ENCODE measurements at regions of chr1 and their contacts with region 1.

Region 1: DNA sequence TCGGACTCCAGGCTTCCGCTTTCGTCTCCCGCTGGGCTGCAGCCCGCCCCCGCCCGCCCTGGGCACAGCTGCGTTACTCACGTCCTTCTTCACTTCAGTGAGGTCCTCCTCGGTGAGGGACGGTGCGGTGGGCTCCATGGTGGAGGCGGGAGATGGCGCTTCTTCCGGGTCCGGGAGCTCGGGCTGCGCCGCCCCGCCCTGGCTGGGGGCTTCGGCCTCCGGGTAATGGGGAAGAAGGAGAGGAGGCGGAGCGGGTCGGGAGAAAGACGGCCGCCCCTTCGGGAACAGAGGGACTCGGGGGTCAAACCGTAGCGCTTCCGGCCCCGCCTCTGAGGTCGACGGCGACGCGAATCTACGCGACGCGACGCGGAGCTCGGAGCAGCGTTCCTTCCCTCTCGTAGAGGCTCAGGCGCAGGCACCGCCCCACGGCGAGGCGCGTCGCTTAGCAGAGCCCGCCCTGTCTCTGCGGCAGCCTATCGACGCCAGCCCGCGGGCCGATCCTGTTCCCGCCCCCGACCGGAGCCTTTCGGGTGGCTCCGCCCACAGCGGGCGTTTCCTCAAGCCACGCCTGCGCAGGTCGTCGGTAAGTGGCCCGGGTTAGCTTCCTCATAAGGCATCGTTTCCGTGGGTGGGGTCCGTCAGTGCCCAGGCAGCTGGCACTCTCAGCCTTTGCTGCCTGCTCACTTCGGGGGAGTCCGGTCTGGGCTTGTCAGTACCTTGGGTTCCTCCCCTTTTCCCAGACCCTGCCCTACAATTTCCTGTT is at the start of gene BCL10:
- DNase-seq: peak; percentile 100
- ATAC-seq: peak; percentile 96
- H3K4me3 ChIP-seq: peak within 1 kb of the TSS; percentile 83 to 88
- H3K27ac ChIP-seq: peak within 1 kb of the TSS; percentile 97
- H3K4me1 ChIP-seq: peaks cover 52% of the 10 kb centered on the region
- H3K27me3 ChIP-seq: no peaks in the 10 kb centered on the region
- CTCF ChIP-seq: no peak
- total RNA-seq, gene BCL10: 69.9 TPM

Region 2: DNA sequence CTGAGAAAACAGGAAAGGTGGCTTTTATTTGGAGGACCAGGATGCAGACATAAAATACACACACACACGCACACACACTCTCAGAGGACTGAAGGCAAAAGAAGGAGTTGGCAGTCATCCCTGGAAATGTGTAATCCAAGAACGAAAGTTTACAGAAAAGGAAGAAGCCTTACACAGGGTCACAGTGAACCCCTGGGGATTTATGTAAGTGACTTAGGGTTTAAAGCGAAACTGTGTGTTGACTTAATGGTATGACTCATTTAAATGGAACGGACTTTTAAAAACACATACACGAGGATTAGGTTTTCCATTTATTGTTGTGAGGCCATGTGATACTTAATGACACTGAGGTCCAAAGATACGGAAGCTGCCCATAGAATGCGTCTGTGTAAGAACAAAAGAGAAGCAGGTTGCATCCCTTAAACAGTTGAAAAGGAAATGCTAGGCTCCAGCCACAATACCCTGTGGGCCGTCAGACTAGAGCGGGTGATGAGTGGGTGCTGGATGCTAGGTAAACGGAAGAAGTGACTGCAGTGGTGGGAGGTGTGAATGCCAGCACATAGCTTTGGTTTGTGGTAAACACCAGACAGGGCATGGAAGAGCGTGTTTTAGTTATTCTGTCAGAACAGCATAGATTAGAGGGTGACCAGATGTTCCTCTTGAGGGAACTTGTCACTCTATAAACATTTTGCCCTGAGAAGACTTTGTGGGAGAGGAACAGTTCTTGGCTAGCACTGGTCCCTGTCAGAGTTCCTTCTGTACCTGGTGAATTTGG is 21.6 kb after region 1 on chr1:
- CTCF ChIA-PET with region 1: no interaction called
- POLR2A ChIA-PET with region 1: interaction called, 16 read pairs
- in situ Hi-C with region 1: no loop called
- intact Hi-C with region 1: no loop called
- DNase-seq: peak; percentile 100
- ATAC-seq: peak; percentile 93
- H3K4me3 ChIP-seq: peak overlapping the region; percentile 1 to 37; a peak in 2 of 4 replicates
- H3K27ac ChIP-seq: peak overlapping the region; percentile 89
- H3K4me1 ChIP-seq: peaks cover 42% of the 10 kb centered on the region
- H3K27me3 ChIP-seq: no peaks in the 10 kb centered on the region
- CTCF ChIP-seq: no peak

Region 3: GRCh38 chr1:85440612-85441011 is 164.2 kb after region 1 on chr1:
- CTCF ChIA-PET with region 1: no interaction called
- POLR2A ChIA-PET with region 1: no interaction called
- in situ Hi-C with region 1: no loop called
- intact Hi-C with region 1: no loop called
- DNase-seq: no peak
- ATAC-seq: no peak; the same call in 1 of the 2 replicates
- H3K4me3 ChIP-seq: no peak overlapping the region
- H3K27ac ChIP-seq: peak overlapping the region; percentile 19
- H3K4me1 ChIP-seq: peaks cover 17% of the 10 kb centered on the region
- H3K27me3 ChIP-seq: no peaks in the 10 kb centered on the region
- CTCF ChIP-seq: no peak

Region 4: GRCh38 chr1:85464497-85465098 is 188.2 kb after region 1 on chr1:
- CTCF ChIA-PET with region 1: no interaction called
- POLR2A ChIA-PET with region 1: interaction called, 13 read pairs
- in situ Hi-C with region 1: no loop called
- intact Hi-C with region 1: no loop called
- DNase-seq: no peak
- ATAC-seq: peak; percentile 86
- H3K4me3 ChIP-seq: peak overlapping the region; percentile 80 to 82
- H3K27ac ChIP-seq: peak overlapping the region; percentile 94
- H3K4me1 ChIP-seq: peaks cover 48% of the 10 kb centered on the region
- H3K27me3 ChIP-seq: no peaks in the 10 kb centered on the region
- CTCF ChIP-seq: 0 out of 2 replicates have a peak, but pooled peaks have one; percentile 5

Region 5: DNA sequence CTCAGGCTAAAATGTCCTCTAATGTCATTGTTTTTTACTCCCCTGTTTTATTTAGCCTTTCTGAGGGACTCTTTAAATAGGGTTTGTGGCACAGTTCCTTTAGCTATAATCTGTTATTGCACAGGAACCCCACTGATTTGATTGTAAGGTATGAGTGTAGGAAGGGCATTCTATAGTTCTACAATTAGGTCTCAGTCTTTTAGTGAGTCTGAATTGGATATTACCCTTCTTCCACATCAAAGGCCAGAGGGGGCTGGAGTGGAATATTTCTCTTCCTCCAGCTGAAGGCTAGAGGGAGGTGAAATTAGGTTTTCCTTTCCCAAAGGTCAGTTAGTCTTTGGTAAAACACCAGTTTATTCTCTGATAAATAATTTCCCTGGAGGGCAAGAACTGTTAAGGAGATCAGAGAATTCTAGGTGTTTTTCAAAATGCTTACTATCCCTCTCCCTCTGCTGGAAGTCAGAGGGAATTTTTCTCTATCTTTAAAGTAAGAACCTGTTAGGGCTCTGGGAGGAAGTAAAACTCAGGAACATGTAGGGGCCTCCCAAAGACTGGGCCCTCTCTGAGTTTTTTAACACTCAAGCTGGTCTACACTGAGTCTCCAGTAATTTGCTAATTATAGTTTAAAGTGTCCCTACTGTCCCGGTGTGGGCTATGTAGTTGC is 608.1 kb after region 1 on chr1:
- CTCF ChIA-PET with region 1: no interaction called
- POLR2A ChIA-PET with region 1: interaction called, 16 read pairs
- in situ Hi-C with region 1: no loop called
- intact Hi-C with region 1: no loop called
- DNase-seq: peak; percentile 41
- ATAC-seq: peak; percentile 95
- H3K4me3 ChIP-seq: no peak overlapping the region
- H3K27ac ChIP-seq: no peak overlapping the region
- H3K4me1 ChIP-seq: no peaks in the 10 kb centered on the region
- H3K27me3 ChIP-seq: no peaks in the 10 kb centered on the region
- CTCF ChIP-seq: peak; percentile 86